Vagina (tissue), 2 donors: ENCODE measurements at regions of chr17 and their contacts with region 1.

Region 1: GRCh38 chr17:39730095-39730921 is at the start of gene MIEN1:
- DNase-seq: no peak
- H3K4me3 ChIP-seq: peak within 1 kb of the TSS; percentile 70 to 74
- H3K27ac ChIP-seq: peak within 1 kb of the TSS; percentile 89
- H3K4me1 ChIP-seq: peaks cover 20% of the 10 kb centered on the region
- H3K27me3 ChIP-seq: no peaks in the 10 kb centered on the region
- CTCF ChIP-seq: peak; percentile 88 to 93 (median 88)
- POLR2A ChIP-seq: peak in 1 of 2 donors; percentile 77
- total RNA-seq, gene MIEN1: 74.2 TPM

Region 2: GRCh38 chr17:39573447-39574298 is 156.6 kb before region 1 on chr17:
- intact Hi-C with region 1: no loop called
- DNase-seq: no peak
- H3K4me3 ChIP-seq: peak overlapping the region; percentile 59 to 71
- H3K27ac ChIP-seq: peak overlapping the region; percentile 66
- H3K4me1 ChIP-seq: peaks cover 15% of the 10 kb centered on the region
- H3K27me3 ChIP-seq: no peaks in the 10 kb centered on the region
- CTCF ChIP-seq: no peak
- POLR2A ChIP-seq: no peak

Region 3: DNA sequence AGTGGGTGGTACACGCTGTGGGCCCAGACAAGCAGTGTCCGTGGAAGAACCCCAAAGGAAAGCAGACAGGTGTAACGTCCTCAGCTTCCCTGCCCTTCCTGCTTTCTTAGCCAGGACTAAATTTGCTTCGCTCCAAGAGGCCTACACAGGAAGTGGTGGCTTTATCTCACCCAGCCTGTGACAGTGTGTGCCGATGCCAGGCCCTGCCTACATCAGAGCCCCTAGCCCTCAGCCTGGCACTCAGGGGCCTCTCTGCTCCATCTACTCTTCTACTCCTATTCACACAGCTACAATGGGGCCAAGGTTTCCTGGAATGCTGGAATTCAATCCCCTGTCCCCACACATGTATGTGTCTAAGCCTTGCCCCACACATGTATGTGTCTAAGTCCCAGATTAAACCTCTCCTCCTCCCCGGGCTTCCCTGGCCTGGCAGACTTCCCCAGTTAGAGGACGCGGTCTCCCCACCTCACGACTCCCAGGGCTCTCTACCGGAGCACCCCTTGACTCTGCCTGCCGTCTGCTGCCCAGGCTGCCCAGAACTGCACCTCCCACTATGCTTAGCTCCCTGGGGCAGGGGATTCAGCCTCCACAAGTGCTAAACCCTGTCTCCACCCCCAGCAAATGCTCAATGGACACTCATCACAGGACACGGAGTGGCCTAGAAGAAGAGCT is 50.7 kb before region 1 on chr17:
- intact Hi-C with region 1: loop called (anchors 5 kb)
- DNase-seq: no peak
- H3K4me3 ChIP-seq: no peak overlapping the region
- H3K27ac ChIP-seq: no peak overlapping the region
- H3K4me1 ChIP-seq: peaks cover 22% of the 10 kb centered on the region
- H3K27me3 ChIP-seq: no peaks in the 10 kb centered on the region
- CTCF ChIP-seq: no peak
- POLR2A ChIP-seq: no peak